Activated naive CD8-positive, alpha-beta T cell treated with anti-CD3 and anti-CD28 coated beads, Interleukin-2, amount 10 ng/mL, durations not matched to agents 7 days and 5 days (primary cell): ENCODE measurements at regions of chr7 and their contacts with region 1.

Region 1: GRCh38 chr7:108146070-108146837 is 16.1 kb upstream of the LAMB4 start:
- DNase-seq: peak; percentile 36
- ATAC-seq: peak; percentile 73
- H3K4me3 Mint-ChIP-seq: no peak overlapping the region
- H3K27ac Mint-ChIP-seq: no peak overlapping the region
- H3K4me1 Mint-ChIP-seq: peaks cover 5% of the 10 kb centered on the region
- H3K27me3 Mint-ChIP-seq: no peaks in the 10 kb centered on the region

Region 2: DNA sequence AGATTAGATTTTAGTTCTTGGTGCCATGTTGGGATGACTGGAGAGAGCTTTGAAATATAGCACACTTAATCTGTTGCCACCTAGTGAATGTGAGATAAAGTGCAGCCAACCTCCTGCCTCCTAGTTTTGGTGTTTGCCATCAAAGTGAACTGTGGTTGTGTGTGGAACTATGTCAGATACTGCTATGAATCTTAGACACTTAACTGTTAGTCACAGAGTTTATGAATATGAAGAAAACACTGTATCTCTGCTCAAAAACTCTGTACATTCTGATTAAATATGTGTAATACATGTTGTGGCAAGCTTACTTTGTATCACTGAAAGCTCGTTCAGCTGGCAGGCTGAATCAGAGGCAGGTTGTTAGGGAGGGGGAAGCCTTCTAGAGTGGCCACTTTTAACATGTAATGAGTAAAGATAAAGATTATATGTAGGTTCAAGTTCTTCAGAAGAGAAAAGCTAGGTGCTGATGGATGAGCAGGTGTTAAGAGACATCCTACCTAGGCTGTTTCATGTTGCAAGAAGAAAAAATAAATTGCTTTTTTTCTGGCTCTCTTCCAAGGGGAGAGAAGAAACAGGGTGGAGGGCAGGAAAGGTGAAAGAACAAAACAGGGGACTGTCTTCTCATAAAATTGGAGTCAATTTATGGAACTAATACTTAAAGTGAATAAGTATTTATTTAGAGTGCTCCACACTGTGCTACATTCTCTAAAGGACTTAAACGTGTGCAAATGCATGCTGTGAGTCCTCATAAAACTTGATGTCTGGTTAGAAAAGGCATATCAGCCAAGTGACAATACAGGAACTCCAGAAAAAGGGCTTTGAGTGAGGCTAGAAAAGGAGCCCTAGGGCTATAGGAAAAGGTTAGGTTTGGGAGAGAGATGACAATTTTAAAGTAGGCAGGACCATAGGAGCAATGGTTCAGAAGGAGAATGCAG is 129.1 kb before region 1 on chr7:
- POLR2A ChIA-PET with region 1: no interaction called
- DNase-seq: no peak
- ATAC-seq: peak; percentile 39
- H3K4me3 Mint-ChIP-seq: no peak overlapping the region
- H3K27ac Mint-ChIP-seq: no peak overlapping the region
- H3K4me1 Mint-ChIP-seq: peaks cover 4% of the 10 kb centered on the region
- H3K27me3 Mint-ChIP-seq: peaks cover 11% of the 10 kb centered on the region

Region 3: GRCh38 chr7:108114117-108114841 is 32.0 kb before region 1 on chr7:
- POLR2A ChIA-PET with region 1: interaction called, 10 read pairs
- DNase-seq: peak; percentile 39
- ATAC-seq: peak; percentile 79
- H3K4me3 Mint-ChIP-seq: no peak overlapping the region
- H3K27ac Mint-ChIP-seq: no peak overlapping the region
- H3K4me1 Mint-ChIP-seq: peaks cover under 1% of the 10 kb centered on the region
- H3K27me3 Mint-ChIP-seq: peaks cover 2% of the 10 kb centered on the region